PC-9 (cell line): ENCODE measurements at regions of chr1 and their contacts with region 1.

Region 1: GRCh38 chr1:45018599-45019230 is 6.7 kb downstream of the UROD start:
- DNase-seq: peak; percentile 46 to 67
- H3K4me3 ChIP-seq: no peak overlapping the region
- H3K27ac ChIP-seq: no peak overlapping the region
- H3K4me1 ChIP-seq: no peaks in the 10 kb centered on the region
- H3K27me3 ChIP-seq: no peaks in the 10 kb centered on the region
- CTCF ChIP-seq: peak; percentile 78

Region 2: DNA sequence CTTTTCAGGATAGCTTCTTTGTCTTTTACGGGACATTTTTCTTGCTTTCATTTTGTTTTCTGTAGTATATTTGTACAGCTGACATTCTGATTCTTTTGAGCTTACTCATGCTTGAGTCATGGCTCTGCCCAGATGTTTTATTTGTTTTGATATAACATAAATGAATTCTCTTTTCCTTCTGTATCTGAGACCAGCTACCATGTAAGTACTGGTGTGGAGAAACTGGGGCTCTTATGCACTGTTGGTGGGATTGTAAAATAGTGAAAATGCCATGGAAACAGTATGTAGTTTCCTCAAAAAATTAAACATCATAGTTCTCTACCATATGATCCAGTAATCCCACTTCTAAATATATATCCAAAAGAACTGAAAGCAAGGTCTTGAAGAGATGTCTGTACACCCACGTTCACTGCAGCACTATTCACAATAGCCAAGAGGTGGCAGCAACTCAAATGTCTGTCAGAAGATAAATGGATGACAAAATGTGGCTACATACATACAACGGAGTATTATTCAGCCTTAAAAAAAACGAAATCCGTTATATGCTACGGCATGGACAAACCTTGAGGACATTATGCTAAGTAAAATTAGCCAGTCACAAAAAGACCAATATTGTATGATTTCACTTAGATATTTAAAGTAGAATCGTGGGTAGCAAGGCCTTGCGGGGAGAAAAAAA is 93.7 kb before region 1 on chr1:
- CTCF ChIA-PET with region 1: interaction called, 18 read pairs
- POLR2A ChIA-PET with region 1: no interaction called
- intact Hi-C with region 1: no loop called
- DNase-seq: peak; percentile 8 to 44
- H3K4me3 ChIP-seq: no peak overlapping the region
- H3K27ac ChIP-seq: no peak overlapping the region
- H3K4me1 ChIP-seq: peaks cover 10% of the 10 kb centered on the region; the same call in 1 of the 2 replicates
- H3K27me3 ChIP-seq: no peaks in the 10 kb centered on the region
- CTCF ChIP-seq: peak; percentile 54; the same call in 1 of the 2 replicates

Region 3: GRCh38 chr1:45230540-45230939 is 211.8 kb after region 1 on chr1:
- CTCF ChIA-PET with region 1: no interaction called
- POLR2A ChIA-PET with region 1: no interaction called
- intact Hi-C with region 1: loop called (anchors 1 kb)
- DNase-seq: no peak
- H3K4me3 ChIP-seq: no peak overlapping the region
- H3K27ac ChIP-seq: no peak overlapping the region
- H3K4me1 ChIP-seq: no peaks in the 10 kb centered on the region
- H3K27me3 ChIP-seq: no peaks in the 10 kb centered on the region
- CTCF ChIP-seq: peak; percentile 46; the same call in 1 of the 2 replicates

Region 4: DNA sequence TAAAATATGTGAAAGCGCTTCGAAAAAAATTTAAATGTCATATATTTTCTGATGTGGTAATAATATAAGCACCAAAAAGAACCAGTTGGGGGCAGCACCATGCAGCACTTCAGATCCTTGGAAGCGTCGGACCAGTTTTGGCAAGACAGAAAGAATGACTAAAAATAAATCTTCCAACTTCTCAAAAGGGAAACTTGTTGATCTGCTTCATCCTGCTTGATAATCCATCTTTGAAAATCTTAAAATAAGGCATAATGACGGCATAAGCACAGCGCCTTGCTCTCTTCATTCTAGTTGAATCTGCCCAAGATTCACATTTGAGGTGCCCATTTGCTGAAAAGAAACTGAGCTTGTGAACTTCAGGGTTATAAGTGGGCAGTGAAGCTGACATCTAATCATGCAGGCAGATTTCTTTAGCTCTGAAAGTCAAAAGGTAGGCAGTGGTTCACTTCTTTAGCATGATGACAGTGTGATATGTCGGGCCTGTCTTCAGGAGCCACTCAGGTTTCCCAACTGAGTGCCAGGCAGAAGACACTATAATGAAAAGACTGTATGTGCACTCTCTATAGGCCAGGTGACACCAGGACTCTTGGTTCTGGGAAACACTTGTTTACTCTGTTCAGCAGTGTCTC is 341.3 kb after region 1 on chr1:
- CTCF ChIA-PET with region 1: no interaction called
- POLR2A ChIA-PET with region 1: no interaction called
- intact Hi-C with region 1: loop called (anchors 5 kb)
- DNase-seq: peak; percentile 49 to 64
- H3K4me3 ChIP-seq: no peak overlapping the region
- H3K27ac ChIP-seq: no peak overlapping the region
- H3K4me1 ChIP-seq: peaks cover 21% of the 10 kb centered on the region
- H3K27me3 ChIP-seq: no peaks in the 10 kb centered on the region
- CTCF ChIP-seq: peak; percentile 84